Heart left ventricle (tissue), 16 donors: ENCODE measurements at regions of chr9 and their contacts with region 1.

Region 1: GRCh38 chr9:93415176-93415690 is 36.3 kb upstream of the FAM120A start:
- DNase-seq: no peak
- ATAC-seq: no peak
- H3K4me3 ChIP-seq: no peak overlapping the region
- H3K27ac ChIP-seq: no peak overlapping the region
- H3K4me1 ChIP-seq: no peaks in the 10 kb centered on the region
- H3K27me3 ChIP-seq: no peaks in the 10 kb centered on the region
- CTCF ChIP-seq: no peak
- POLR2A ChIP-seq: no peak

Region 2: DNA sequence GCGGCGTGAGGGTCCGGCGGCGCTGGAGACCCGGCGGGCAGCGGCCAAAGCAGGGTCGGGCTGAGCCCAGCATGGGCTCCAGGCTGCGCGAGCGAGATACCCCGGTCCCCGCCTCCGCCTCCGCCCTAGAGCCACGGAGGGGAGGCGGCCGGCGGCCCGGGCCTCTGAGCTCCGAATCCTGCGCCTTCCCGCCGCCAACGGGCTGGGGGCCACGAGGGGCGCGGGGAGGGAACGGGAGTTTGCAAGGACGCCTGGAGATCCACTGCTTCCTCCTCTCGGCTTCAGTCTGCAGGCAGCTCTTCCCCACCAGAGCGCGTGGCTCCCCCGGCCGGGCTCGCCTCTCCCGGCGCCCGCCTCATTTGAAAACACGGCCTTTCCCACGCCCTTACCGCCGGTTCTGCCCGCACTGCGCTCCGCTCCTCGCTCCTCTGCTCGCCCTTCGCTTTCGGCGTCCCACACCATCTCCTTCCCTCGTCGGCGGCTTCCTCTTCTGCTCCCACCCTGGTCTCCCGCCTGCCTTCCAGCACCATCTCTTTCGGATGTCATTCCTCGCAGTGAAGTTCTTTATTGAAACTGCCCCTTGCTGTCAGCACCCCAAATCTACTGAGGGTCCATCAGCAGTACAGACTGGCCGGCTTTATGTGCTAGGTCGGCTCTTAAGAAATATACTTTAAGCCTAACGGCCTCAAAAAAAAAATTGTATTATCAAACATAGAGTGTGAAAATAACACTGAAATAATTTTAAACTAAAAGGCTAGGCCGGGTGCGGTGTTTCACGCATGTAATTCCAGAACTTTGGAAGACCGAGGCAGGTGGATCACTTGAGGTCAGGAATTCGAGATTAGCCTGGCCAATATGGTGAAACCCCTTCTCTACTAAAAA is 68.8 kb before region 1 on chr9:
- intact Hi-C with region 1: no loop called
- DNase-seq: no peak
- ATAC-seq: peak in 3 of 4 donors; percentile 42 to 70 (median 61)
- H3K4me3 ChIP-seq: peak overlapping the region; percentile 8 to 63 (median 52)
- H3K27ac ChIP-seq: peak overlapping the region in 1 of 12 donors; percentile 30
- H3K4me1 ChIP-seq: peaks cover 0 to 12% (median 2%) of the 10 kb centered on the region in 12 donors
- H3K27me3 ChIP-seq: peaks cover 0 to 23% (median 12%) of the 10 kb centered on the region in 9 donors
- CTCF ChIP-seq: no peak
- POLR2A ChIP-seq: no peak

Region 3: GRCh38 chr9:93978551-93978950 is 563.3 kb after region 1 on chr9:
- intact Hi-C with region 1: loop called in 1 of 10 experiments (anchors 10 kb)
- DNase-seq: no peak
- ATAC-seq: no peak
- H3K4me3 ChIP-seq: no peak overlapping the region
- H3K27ac ChIP-seq: no peak overlapping the region
- H3K4me1 ChIP-seq: no peaks in the 10 kb centered on the region
- H3K27me3 ChIP-seq: peaks cover 0 to 20% (median 3%) of the 10 kb centered on the region in 9 donors
- CTCF ChIP-seq: no peak
- POLR2A ChIP-seq: no peak